GM23248 (cell line): ENCODE measurements at regions of chr6 and their contacts with region 1.

Region 1: GRCh38 chr6:57316581-57317059 is 810 bp upstream of the PRIM2 start:
- DNase-seq: peak; percentile 95
- H3K4me3 ChIP-seq: peak overlapping the region; percentile 89
- H3K27ac ChIP-seq: peak overlapping the region; percentile 66
- H3K4me1 ChIP-seq: peaks cover 62% of the 10 kb centered on the region
- H3K27me3 ChIP-seq: no peaks in the 10 kb centered on the region

Region 2: GRCh38 chr6:57104336-57104735 is 212.3 kb before region 1 on chr6:
- in situ Hi-C with region 1: no loop called
- DNase-seq: no peak
- H3K4me3 ChIP-seq: no peak overlapping the region
- H3K27ac ChIP-seq: no peak overlapping the region
- H3K4me1 ChIP-seq: no peaks in the 10 kb centered on the region
- H3K27me3 ChIP-seq: no peaks in the 10 kb centered on the region

Region 3: DNA sequence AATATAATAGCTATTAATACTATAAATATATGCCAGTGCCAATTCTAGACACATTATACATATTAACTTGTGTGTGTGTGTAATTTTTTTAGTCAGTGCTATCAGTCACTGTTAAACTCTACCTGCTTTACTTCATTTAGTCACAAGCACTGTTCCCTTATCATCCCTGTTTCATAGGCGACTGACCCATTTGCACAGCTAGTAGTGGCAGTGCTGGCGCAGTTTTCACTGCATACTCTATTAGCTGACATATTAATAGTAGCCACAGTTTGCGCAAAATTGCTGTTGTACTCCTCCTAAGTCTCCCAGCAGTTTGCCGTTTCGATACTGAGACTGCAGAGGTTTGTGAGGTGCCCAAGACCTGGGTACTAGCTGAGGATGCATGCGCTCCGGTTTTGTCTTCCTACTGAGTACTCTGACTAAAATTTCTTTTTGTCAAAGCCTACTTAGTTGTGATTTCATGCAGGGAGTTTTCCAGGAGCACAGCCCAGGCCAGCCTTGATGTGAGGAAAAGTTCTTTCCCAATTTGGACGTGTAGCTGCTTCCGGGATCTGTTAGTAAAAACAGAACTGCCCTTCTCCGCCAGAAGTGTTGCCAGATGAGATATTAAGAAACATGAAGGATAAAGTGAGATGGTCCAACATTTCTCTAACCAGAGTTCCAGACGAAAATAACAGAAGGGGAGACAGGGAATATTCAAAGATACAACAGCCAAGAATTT is 138.9 kb before region 1 on chr6:
- in situ Hi-C with region 1: loop called (anchors 5 kb)
- DNase-seq: peak; percentile 67
- H3K4me3 ChIP-seq: peak overlapping the region; percentile 54
- H3K27ac ChIP-seq: peak overlapping the region; percentile 54
- H3K4me1 ChIP-seq: peaks cover 51% of the 10 kb centered on the region
- H3K27me3 ChIP-seq: no peaks in the 10 kb centered on the region